ENCODE measurements at regions of chr5 and their contacts with region 1.

Region 1: DNA sequence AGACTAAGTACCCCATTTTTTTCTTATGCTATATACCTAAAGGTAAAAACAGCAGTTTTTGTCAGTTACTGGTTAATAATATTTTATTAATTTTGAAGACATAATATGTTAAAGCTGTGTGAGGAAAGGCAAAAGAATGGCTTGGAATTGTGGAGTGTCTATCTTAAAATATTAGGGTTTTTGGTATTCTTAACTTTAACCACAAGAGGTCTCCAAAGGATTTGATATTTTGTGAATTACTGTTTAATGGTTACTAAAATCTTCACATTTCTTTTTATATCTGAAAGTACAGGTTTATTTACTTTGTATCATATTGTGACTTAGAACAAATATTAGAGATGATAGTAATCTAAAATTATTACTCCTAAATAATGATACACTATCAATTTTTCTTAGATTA is 32.0 kb upstream of the DHFR start:
- DNase-seq: peak in 1 of 4 donors; percentile 16
- ATAC-seq: peak; percentile 34
- H3K4me3 ChIP-seq: no peak overlapping the region
- H3K27ac ChIP-seq: no peak overlapping the region
- H3K4me1 ChIP-seq: no peaks in the 10 kb centered on the region
- H3K27me3 ChIP-seq: no peaks in the 10 kb centered on the region
- CTCF ChIP-seq: peak in 1 of 2 donors; percentile 30

Region 2: DNA sequence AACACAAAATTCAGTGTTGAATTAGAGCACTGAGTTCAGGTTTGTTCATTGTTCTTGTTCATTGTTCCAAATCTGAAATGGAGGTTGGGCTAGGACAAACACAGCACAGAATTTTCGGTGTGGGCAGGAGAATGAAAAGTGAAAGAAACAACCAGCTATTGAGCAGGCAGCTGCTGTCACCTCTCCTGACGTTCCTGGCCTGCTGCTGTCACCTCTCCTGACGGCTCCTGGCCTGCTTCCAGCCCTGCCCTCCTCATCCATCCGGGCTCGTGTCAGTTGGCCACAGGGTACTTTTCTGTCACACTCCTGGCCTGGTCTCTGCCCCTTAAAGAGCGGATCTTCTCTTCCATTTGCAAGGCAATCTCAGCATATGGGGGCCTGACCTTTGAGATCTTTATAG is 501.1 kb after region 1 on chr5:
- intact Hi-C with region 1: loop called in 1 of 2 experiments (anchors 10 kb)
- DNase-seq: no peak
- ATAC-seq: no peak
- H3K4me3 ChIP-seq: no peak overlapping the region
- H3K27ac ChIP-seq: no peak overlapping the region
- H3K4me1 ChIP-seq: no peaks in the 10 kb centered on the region
- H3K27me3 ChIP-seq: no peaks in the 10 kb centered on the region
- CTCF ChIP-seq: no peak